Kidney (tissue), 22 donors: ENCODE measurements at regions of chr4 and their contacts with region 1.

Region 1: GRCh38 chr4:1351854-1352633 is 5.0 kb downstream of the UVSSA start:
- DNase-seq: peak; percentile 86 to 92 (median 87)
- H3K4me3 ChIP-seq: no peak overlapping the region
- H3K27ac ChIP-seq: no peak overlapping the region
- H3K4me1 ChIP-seq: peaks cover 2 to 21% (median 11%) of the 10 kb centered on the region in 3 donors
- H3K27me3 ChIP-seq: no peaks in the 10 kb centered on the region
- CTCF ChIP-seq: peak; percentile 93

Region 2: GRCh38 chr4:1218634-1219565 is 133.1 kb before region 1 on chr4:
- intact Hi-C with region 1: no loop called
- DNase-seq: no peak
- H3K4me3 ChIP-seq: no peak overlapping the region
- H3K27ac ChIP-seq: no peak overlapping the region
- H3K4me1 ChIP-seq: peaks cover 0 to 14% (median 0%) of the 10 kb centered on the region in 3 donors
- H3K27me3 ChIP-seq: no peaks in the 10 kb centered on the region
- CTCF ChIP-seq: no peak

Region 3: GRCh38 chr4:1628892-1629698 is 277.1 kb after region 1 on chr4:
- intact Hi-C with region 1: loop called (anchors 10 kb)
- DNase-seq: peak; percentile 61 to 84 (median 71)
- H3K4me3 ChIP-seq: no peak overlapping the region
- H3K27ac ChIP-seq: no peak overlapping the region
- H3K4me1 ChIP-seq: no peaks in the 10 kb centered on the region
- H3K27me3 ChIP-seq: no peaks in the 10 kb centered on the region
- CTCF ChIP-seq: peak; percentile 87